ENCODE measurements at regions of chr7 and their contacts with region 1.

Region 1: GRCh38 chr7:55509322-55509721 is 63.0 kb downstream of the VOPP1 start:
- DNase-seq: no peak
- ATAC-seq: peak; percentile 46
- H3K4me3 ChIP-seq: no peak overlapping the region
- H3K27ac ChIP-seq: peak overlapping the region; percentile 51
- H3K4me1 ChIP-seq: peaks cover 75% of the 10 kb centered on the region
- H3K27me3 ChIP-seq: no peaks in the 10 kb centered on the region
- CTCF ChIP-seq: peak in 1 of 3 experiments; percentile 12; a peak in 1 of 6 replicates
- EP300 ChIP-seq: no peak
- POLR2A ChIP-seq: no peak
- RAD21 ChIP-seq: no peak

Region 2: GRCh38 chr7:54888067-54888733 is 621.1 kb before region 1 on chr7:
- CTCF ChIA-PET with region 1: no interaction called
- POLR2A ChIA-PET with region 1: no interaction called
- RAD21 ChIA-PET with region 1: no interaction called
- SMC1A ChIA-PET with region 1: no interaction called
- in situ Hi-C with region 1: no loop called
- intact Hi-C with region 1: no loop called
- DNase-seq: no peak
- ATAC-seq: no peak
- H3K4me3 ChIP-seq: no peak overlapping the region
- H3K27ac ChIP-seq: no peak overlapping the region
- H3K4me1 ChIP-seq: no peaks in the 10 kb centered on the region
- H3K27me3 ChIP-seq: no peaks in the 10 kb centered on the region; a peak in 1 of 4 replicates
- CTCF ChIP-seq: no peak
- EP300 ChIP-seq: no peak
- POLR2A ChIP-seq: no peak
- RAD21 ChIP-seq: no peak

Region 3: DNA sequence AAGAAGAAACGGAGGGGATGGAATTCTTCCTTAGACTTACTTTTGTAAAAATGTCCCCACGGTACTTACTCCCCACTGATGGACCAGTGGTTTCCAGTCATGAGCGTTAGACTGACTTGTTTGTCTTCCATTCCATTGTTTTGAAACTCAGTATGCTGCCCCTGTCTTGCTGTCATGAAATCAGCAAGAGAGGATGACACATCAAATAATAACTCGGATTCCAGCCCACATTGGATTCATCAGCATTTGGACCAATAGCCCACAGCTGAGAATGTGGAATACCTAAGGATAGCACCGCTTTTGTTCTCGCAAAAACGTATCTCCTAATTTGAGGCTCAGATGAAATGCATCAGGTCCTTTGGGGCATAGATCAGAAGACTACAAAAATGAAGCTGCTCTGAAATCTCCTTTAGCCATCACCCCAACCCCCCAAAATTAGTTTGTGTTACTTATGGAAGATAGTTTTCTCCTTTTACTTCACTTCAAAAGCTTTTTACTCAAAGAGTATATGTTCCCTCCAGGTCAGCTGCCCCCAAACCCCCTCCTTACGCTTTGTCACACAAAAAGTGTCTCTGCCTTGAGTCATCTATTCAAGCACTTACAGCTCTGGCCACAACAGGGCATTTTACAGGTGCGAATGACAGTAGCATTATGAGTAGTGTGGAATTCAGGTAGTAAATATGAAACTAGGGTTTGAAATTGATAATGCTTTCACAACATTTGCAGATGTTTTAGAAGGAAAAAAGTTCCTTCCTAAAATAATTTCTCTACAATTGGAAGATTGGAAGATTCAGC is 302.9 kb before region 1 on chr7:
- CTCF ChIA-PET with region 1: no interaction called
- POLR2A ChIA-PET with region 1: no interaction called
- RAD21 ChIA-PET with region 1: no interaction called
- SMC1A ChIA-PET with region 1: no interaction called
- in situ Hi-C with region 1: no loop called
- intact Hi-C with region 1: no loop called
- DNase-seq: no peak
- ATAC-seq: peak; percentile 73
- H3K4me3 ChIP-seq: no peak overlapping the region
- H3K27ac ChIP-seq: no peak overlapping the region
- H3K4me1 ChIP-seq: no peaks in the 10 kb centered on the region
- H3K27me3 ChIP-seq: no peaks in the 10 kb centered on the region
- CTCF ChIP-seq: no peak
- EP300 ChIP-seq: no peak
- POLR2A ChIP-seq: no peak
- RAD21 ChIP-seq: no peak

Region 4: GRCh38 chr7:55365675-55366460 is 143.5 kb before region 1 on chr7:
- CTCF ChIA-PET with region 1: no interaction called
- POLR2A ChIA-PET with region 1: no interaction called
- RAD21 ChIA-PET with region 1: no interaction called
- SMC1A ChIA-PET with region 1: no interaction called
- in situ Hi-C with region 1: no loop called
- intact Hi-C with region 1: loop called (anchors 2 kb)
- DNase-seq: peak; percentile 79
- ATAC-seq: peak; percentile 90
- H3K4me3 ChIP-seq: peak overlapping the region; percentile 99
- H3K27ac ChIP-seq: peak overlapping the region; percentile 91
- H3K4me1 ChIP-seq: peaks cover 9% of the 10 kb centered on the region
- H3K27me3 ChIP-seq: no peaks in the 10 kb centered on the region
- CTCF ChIP-seq: peak in 2 of 3 experiments; percentile 30 to 32; a peak in 3 of 6 replicates
- EP300 ChIP-seq: peak in 1 of 2 experiments; percentile 22; a peak in 1 of 4 replicates
- POLR2A ChIP-seq: peak; percentile 93
- RAD21 ChIP-seq: peak; percentile 31; the same call in 1 of the 2 replicates

Region 5: GRCh38 chr7:55526770-55527169 is 17.4 kb after region 1 on chr7:
- CTCF ChIA-PET with region 1: interaction called, 67 read pairs
- POLR2A ChIA-PET with region 1: interaction called, 122 read pairs
- RAD21 ChIA-PET with region 1: interaction called, 150 read pairs
- SMC1A ChIA-PET with region 1: interaction called, 354 read pairs
- in situ Hi-C with region 1: no loop called
- intact Hi-C with region 1: no loop called
- DNase-seq: no peak
- ATAC-seq: peak; percentile 75
- H3K4me3 ChIP-seq: no peak overlapping the region
- H3K27ac ChIP-seq: peak overlapping the region; percentile 62
- H3K4me1 ChIP-seq: peaks cover 66% of the 10 kb centered on the region
- H3K27me3 ChIP-seq: no peaks in the 10 kb centered on the region
- CTCF ChIP-seq: no peak
- EP300 ChIP-seq: no peak; a peak in 1 of 4 replicates
- POLR2A ChIP-seq: no peak
- RAD21 ChIP-seq: no peak

Region 6: GRCh38 chr7:55546829-55547228 is 37.5 kb after region 1 on chr7:
- CTCF ChIA-PET with region 1: interaction called, 10 read pairs
- POLR2A ChIA-PET with region 1: interaction called, 8 read pairs
- RAD21 ChIA-PET with region 1: interaction called, 5 read pairs
- SMC1A ChIA-PET with region 1: interaction called, 38 read pairs
- in situ Hi-C with region 1: no loop called
- intact Hi-C with region 1: no loop called
- DNase-seq: no peak
- ATAC-seq: peak; percentile 64
- H3K4me3 ChIP-seq: peak overlapping the region; percentile 22; the same call in 1 of the 2 replicates
- H3K27ac ChIP-seq: peak overlapping the region; percentile 82
- H3K4me1 ChIP-seq: peaks cover 72% of the 10 kb centered on the region
- H3K27me3 ChIP-seq: no peaks in the 10 kb centered on the region
- CTCF ChIP-seq: no peak
- EP300 ChIP-seq: no peak
- POLR2A ChIP-seq: no peak
- RAD21 ChIP-seq: no peak

Region 7: DNA sequence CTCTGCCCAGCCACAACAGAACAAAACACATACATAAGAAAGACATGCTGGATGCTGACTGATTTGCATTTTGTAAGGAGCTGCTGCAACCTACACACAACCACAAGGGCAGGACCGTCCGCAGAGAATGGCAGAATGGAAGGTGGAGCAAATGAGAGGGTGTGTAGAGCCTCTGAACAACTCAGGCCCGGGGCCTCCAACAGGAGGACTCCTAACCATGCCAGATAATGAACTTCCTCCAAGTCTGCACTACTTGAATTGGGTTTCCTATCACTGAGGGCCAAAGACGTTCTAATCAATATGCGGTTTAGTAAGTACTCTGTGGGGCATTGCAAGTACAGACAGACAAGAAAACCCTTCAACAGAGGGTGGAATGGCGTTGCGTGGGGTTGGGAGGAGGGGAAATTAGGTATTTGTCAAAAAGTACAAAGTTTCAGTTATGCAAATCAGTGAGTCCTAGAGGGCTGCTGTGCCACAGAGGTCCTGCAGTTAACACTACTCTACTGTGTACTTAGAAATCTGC is 48.4 kb after region 1 on chr7:
- CTCF ChIA-PET with region 1: interaction called, 4 read pairs
- POLR2A ChIA-PET with region 1: no interaction called
- RAD21 ChIA-PET with region 1: interaction called, 8 read pairs
- SMC1A ChIA-PET with region 1: interaction called, 16 read pairs
- in situ Hi-C with region 1: no loop called
- intact Hi-C with region 1: no loop called
- DNase-seq: peak; percentile 85
- ATAC-seq: peak; percentile 87
- H3K4me3 ChIP-seq: peak overlapping the region; percentile 70
- H3K27ac ChIP-seq: peak overlapping the region; percentile 57
- H3K4me1 ChIP-seq: peaks cover 82% of the 10 kb centered on the region
- H3K27me3 ChIP-seq: no peaks in the 10 kb centered on the region
- CTCF ChIP-seq: peak in 2 of 3 experiments; percentile 7 to 12; a peak in 1 of 6 replicates
- EP300 ChIP-seq: peak; percentile 32 to 54; a peak in 3 of 4 replicates
- POLR2A ChIP-seq: peak; percentile 57
- RAD21 ChIP-seq: no peak

Region 8: GRCh38 chr7:55567571-55567970 is 58.2 kb after region 1 on chr7:
- CTCF ChIA-PET with region 1: interaction called, 4 read pairs
- POLR2A ChIA-PET with region 1: interaction called, 4 read pairs
- RAD21 ChIA-PET with region 1: interaction called, 79 read pairs
- SMC1A ChIA-PET with region 1: interaction called, 74 read pairs
- in situ Hi-C with region 1: no loop called
- intact Hi-C with region 1: no loop called
- DNase-seq: no peak
- ATAC-seq: peak; percentile 16
- H3K4me3 ChIP-seq: peak overlapping the region; percentile 60
- H3K27ac ChIP-seq: peak overlapping the region; percentile 72
- H3K4me1 ChIP-seq: peaks cover 44% of the 10 kb centered on the region
- H3K27me3 ChIP-seq: no peaks in the 10 kb centered on the region
- CTCF ChIP-seq: no peak
- EP300 ChIP-seq: no peak
- POLR2A ChIP-seq: no peak
- RAD21 ChIP-seq: no peak

Region 9: DNA sequence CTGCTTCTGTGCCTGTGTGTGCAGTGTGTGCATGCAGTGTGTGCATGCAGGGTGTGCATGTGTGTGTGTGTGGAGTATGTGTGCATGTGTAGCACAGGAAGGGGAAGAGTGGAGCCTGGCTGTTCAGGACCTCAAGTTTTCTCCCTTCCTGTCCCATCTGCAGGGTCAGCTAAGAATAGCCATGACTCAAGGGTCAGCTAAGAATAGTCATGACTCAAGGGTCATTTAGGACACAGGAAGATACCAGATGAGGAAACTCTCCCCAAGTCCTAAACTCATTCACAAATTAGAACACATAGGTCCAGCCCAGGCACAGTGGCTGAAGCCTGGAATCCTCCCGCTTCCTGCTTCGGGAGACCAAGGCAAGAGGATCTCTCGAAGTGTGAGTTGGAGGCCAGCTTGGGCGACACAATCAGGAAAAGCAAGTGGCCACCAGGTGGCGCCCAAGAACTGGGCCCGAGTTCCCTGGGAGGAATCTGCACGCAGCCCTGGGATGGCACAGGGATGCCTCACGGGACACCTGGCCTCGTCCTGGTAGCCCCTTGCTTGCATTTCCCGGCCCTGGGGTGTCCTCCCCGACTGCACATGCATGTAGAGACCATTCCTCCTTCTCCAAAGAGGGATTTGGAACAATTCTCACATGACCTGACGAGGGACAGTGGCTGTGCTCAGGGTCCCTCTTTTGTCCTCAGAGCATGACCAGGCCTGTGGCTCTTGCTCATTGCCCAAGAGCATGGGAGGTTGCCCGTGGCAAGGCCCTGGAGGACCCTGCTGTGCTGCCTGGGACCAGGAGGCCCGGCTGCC is 84.4 kb after region 1 on chr7:
- CTCF ChIA-PET with region 1: interaction called, 13 read pairs
- POLR2A ChIA-PET with region 1: no interaction called
- RAD21 ChIA-PET with region 1: interaction called, 7 read pairs
- SMC1A ChIA-PET with region 1: interaction called, 11 read pairs
- in situ Hi-C with region 1: no loop called
- intact Hi-C with region 1: no loop called
- DNase-seq: no peak
- ATAC-seq: peak; percentile 84
- H3K4me3 ChIP-seq: no peak overlapping the region
- H3K27ac ChIP-seq: no peak overlapping the region
- H3K4me1 ChIP-seq: peaks cover 9% of the 10 kb centered on the region; the same call in 1 of the 2 replicates
- H3K27me3 ChIP-seq: no peaks in the 10 kb centered on the region
- CTCF ChIP-seq: peak; percentile 73 to 94 (median 90)
- EP300 ChIP-seq: no peak
- POLR2A ChIP-seq: no peak
- RAD21 ChIP-seq: peak; percentile 54